ENCODE measurements at regions of chr4 and their contacts with region 1.

Region 1: GRCh38 chr4:80365928-80366327 is 30.4 kb downstream of the CFAP299 start:
- DNase-seq: peak; percentile 82
- ATAC-seq: peak; percentile 75
- H3K4me3 ChIP-seq: no peak overlapping the region
- H3K27ac ChIP-seq: no peak overlapping the region
- H3K4me1 ChIP-seq: peaks cover 15% of the 10 kb centered on the region; the same call in 1 of the 2 replicates
- H3K27me3 ChIP-seq: no peaks in the 10 kb centered on the region
- CTCF ChIP-seq: peak; percentile 82

Region 2: GRCh38 chr4:80538276-80538926 is 172.5 kb after region 1 on chr4:
- CTCF ChIA-PET with region 1: no interaction called
- POLR2A ChIA-PET with region 1: no interaction called
- intact Hi-C with region 1: loop called (anchors 2 kb)
- DNase-seq: peak; percentile 79
- ATAC-seq: peak; percentile 97
- H3K4me3 ChIP-seq: no peak overlapping the region
- H3K27ac ChIP-seq: 0 out of 2 replicates have a peak overlapping the region, but pooled peaks have one; percentile 21
- H3K4me1 ChIP-seq: peaks cover 20% of the 10 kb centered on the region
- H3K27me3 ChIP-seq: no peaks in the 10 kb centered on the region
- CTCF ChIP-seq: no peak

Region 3: DNA sequence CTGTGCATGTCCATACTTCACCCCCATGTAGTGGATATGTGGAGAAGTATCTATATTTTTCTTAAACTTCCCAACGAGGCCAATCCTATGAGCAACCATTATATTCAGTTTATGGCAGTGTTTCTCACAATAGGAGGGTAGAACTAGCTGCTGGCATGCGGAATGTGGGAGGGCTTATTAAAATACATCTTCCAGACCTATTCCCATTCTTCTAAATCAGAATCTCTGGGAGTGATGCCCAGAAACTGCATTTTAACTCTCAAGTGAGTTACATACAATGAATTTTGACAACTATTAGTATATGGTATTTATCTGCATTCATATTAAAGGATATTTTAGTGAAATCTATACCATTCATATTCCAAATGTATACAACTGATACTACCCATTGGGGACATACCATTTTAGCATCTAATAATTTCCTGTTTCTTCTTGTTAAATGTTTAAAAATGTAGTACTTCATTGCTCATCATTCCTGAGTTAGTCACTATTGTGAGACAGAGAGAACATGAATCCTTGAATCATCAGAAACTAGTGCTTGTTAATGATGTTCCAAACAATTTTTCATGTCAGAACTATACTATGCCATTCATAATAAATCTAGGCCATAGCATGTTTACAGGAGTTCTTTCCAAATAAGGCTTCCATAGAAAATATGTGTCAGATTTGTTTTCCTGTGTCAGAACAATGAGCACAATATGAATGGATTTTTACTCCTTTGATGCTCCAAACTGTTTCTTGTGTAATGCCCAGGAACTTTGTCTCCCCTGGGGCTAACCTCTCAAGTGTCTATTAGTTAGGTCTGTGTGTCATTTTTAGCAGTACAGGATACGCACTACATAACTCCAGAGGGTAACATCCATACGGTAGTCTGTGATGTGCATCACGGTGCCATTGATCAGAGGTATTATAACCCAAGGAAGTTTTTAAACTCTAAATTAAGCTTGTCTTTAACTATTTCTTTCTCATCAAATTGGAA is 465.7 kb after region 1 on chr4:
- CTCF ChIA-PET with region 1: no interaction called
- POLR2A ChIA-PET with region 1: no interaction called
- intact Hi-C with region 1: loop called (anchors 10 kb)
- DNase-seq: peak; percentile 32
- ATAC-seq: peak; percentile 64
- H3K4me3 ChIP-seq: no peak overlapping the region
- H3K27ac ChIP-seq: no peak overlapping the region
- H3K4me1 ChIP-seq: no peaks in the 10 kb centered on the region
- H3K27me3 ChIP-seq: no peaks in the 10 kb centered on the region
- CTCF ChIP-seq: no peak

Region 4: GRCh38 chr4:81040012-81040659 is 674.2 kb after region 1 on chr4:
- CTCF ChIA-PET with region 1: interaction called, 10 read pairs
- POLR2A ChIA-PET with region 1: interaction called, 3 read pairs
- intact Hi-C with region 1: loop called (anchors 1 kb)
- DNase-seq: peak; percentile 75
- ATAC-seq: peak; percentile 61
- H3K4me3 ChIP-seq: no peak overlapping the region
- H3K27ac ChIP-seq: no peak overlapping the region
- H3K4me1 ChIP-seq: peaks cover 14% of the 10 kb centered on the region
- H3K27me3 ChIP-seq: no peaks in the 10 kb centered on the region
- CTCF ChIP-seq: peak; percentile 82

Region 5: DNA sequence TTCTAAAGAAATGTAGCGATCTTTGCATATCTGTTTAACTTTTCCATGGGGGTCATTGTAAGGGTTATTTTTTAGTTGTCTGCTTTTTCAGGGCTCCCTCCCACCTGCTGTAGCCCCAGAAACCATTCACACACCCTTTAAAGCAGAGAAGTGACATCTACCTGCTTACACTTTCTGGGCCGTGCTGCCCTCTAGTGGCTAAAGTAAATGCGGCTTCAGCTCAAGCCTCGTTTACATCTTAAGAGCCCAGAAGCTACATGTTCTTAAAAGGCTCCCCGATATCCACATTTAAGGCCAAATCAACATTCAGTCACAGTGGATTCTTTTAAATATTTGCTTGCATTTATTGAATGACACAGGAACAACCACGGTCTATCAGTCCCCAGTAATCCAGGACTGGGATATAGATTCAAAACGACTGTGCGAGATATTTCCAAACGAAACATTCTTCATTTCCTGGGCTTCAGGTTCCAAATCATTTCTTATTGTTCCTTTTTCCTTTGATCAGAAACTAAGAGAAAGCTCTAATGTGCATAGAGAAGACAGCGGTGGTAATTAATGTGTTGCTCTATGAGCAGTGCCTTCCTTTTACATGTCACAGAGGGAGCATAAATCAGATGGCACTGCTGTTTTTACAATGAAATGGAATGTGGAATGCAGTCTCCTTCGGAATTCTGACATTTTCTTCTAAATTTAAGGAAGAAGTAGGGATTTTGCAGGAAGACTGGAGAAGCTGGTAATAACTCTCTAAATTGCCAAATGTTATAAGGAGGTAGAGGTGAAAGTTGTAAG is 985.9 kb after region 1 on chr4:
- CTCF ChIA-PET with region 1: interaction called, 3 read pairs
- POLR2A ChIA-PET with region 1: no interaction called
- intact Hi-C with region 1: loop called (anchors 5 kb)
- DNase-seq: peak; percentile 75
- ATAC-seq: peak; percentile 83
- H3K4me3 ChIP-seq: no peak overlapping the region
- H3K27ac ChIP-seq: no peak overlapping the region
- H3K4me1 ChIP-seq: no peaks in the 10 kb centered on the region
- H3K27me3 ChIP-seq: no peaks in the 10 kb centered on the region
- CTCF ChIP-seq: peak; percentile 90

Measured in PC-3 (cell line).